Lower leg skin (tissue), 4 donors: ENCODE measurements at regions of chr17 and their contacts with region 1.

Region 1: GRCh38 chr17:75617218-75617617 is 16.0 kb upstream of the SMIM5 start:
- DNase-seq: no peak
- H3K4me3 ChIP-seq: no peak overlapping the region
- CTCF ChIP-seq: no peak
- POLR2A ChIP-seq: no peak

Region 2: GRCh38 chr17:75552425-75553294 is 64.6 kb before region 1 on chr17:
- intact Hi-C with region 1: loop called (anchors 2 kb)
- DNase-seq: no peak
- H3K4me3 ChIP-seq: no peak overlapping the region
- CTCF ChIP-seq: no peak
- POLR2A ChIP-seq: no peak